CD8-positive, alpha-beta T cell (primary cell): ENCODE measurements at regions of chr6 and their contacts with region 1.

Region 1: GRCh38 chr6:136945711-136946121 is 23.6 kb downstream of the SLC35D3 start:
- DNase-seq: no peak
- ATAC-seq: no peak
- H3K4me3 ChIP-seq: no peak overlapping the region
- H3K4me3 Mint-ChIP-seq: no peak overlapping the region
- H3K27ac ChIP-seq: no peak overlapping the region
- H3K27ac Mint-ChIP-seq: no peak overlapping the region
- H3K4me1 ChIP-seq: no peaks in the 10 kb centered on the region
- H3K4me1 Mint-ChIP-seq: no peaks in the 10 kb centered on the region
- H3K27me3 ChIP-seq: no peaks in the 10 kb centered on the region
- H3K27me3 Mint-ChIP-seq: peaks cover 8% of the 10 kb centered on the region
- CTCF ChIP-seq: no peak

Region 2: GRCh38 chr6:137904822-137905617 is 959.3 kb after region 1 on chr6:
- CTCF ChIA-PET with region 1: no interaction called
- POLR2A ChIA-PET with region 1: no interaction called
- intact Hi-C with region 1: loop called in 1 of 2 experiments (anchors 5 kb)
- DNase-seq: peak in 6 of 9 experiments; percentile 31 to 52 (median 44)
- ATAC-seq: peak; percentile 63
- H3K4me3 ChIP-seq: peak overlapping the region in 1 of 2 experiments; percentile 7
- H3K4me3 Mint-ChIP-seq: peak overlapping the region; percentile 62
- H3K27ac ChIP-seq: no peak overlapping the region
- H3K27ac Mint-ChIP-seq: no peak overlapping the region
- H3K4me1 ChIP-seq: peaks cover 6% of the 10 kb centered on the region
- H3K4me1 Mint-ChIP-seq: peaks cover 32% of the 10 kb centered on the region
- H3K27me3 ChIP-seq: no peaks in the 10 kb centered on the region
- H3K27me3 Mint-ChIP-seq: peaks cover 2% of the 10 kb centered on the region
- CTCF ChIP-seq: no peak